Ovary (tissue), 10 donors: ENCODE measurements at regions of chr6 and their contacts with region 1.

Region 1: DNA sequence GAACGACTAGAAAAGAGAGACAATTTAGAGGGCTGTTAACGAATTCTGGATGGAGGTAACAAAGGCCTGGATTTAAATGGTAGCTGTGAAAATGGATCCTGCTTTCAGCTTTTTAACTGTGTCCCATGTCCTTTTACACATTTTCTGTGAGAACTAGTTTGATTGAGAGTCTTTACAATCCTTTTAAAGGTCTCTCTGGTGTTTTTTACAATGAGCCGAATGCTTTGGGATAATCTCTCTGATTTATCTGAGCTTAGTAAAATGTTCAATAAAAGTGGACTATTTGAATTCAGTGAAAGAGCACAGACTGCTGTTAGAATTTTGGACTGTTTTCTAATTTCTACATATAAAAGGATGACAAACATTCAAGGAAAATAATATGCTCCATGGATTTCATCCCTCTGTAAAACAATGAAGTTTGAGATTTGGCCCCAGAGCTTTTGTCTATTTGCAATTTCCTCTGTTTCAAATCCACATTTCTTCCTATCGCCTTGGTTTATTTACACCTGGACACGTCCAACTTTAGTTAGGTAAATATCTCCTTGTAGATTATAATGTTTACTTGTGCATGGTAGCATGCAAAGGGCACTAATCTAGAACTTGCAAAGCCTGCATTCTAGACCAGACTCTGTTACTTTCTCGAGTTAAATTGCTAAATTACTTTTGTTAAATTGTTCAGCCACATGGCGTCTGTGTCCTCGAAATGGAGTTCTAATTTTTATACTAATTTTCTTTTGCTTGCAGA is 871.0 kb upstream of the CITED2 start:
- DNase-seq: no peak
- H3K4me3 ChIP-seq: no peak overlapping the region
- H3K27ac ChIP-seq: no peak overlapping the region
- H3K4me1 ChIP-seq: no peaks in the 10 kb centered on the region
- H3K27me3 ChIP-seq: no peaks in the 10 kb centered on the region
- CTCF ChIP-seq: no peak
- EP300 ChIP-seq: no peak
- POLR2A ChIP-seq: no peak

Region 2: DNA sequence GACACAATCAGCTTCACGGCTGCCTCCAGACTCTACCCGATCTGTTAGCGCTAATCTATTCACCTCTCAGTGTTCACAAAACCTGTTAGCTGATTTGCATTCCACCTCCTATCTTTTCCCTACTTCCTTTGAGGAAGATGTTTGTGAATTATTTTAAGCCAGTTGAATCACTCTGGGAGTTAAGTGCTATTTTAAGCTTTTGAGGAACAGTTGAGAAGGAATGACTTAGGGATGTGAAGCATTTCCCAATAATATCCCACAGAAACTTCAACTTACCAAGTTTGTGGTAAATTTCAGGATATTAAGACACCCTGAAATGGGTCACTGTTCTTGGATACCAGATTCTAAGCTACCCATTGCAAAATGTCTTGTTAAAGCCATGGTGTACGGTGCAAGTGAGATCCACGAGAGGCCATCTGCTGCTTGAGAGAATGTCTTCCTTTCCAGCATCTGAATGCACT is 725.9 kb before region 1 on chr6:
- intact Hi-C with region 1: no loop called
- DNase-seq: no peak
- H3K4me3 ChIP-seq: no peak overlapping the region
- H3K27ac ChIP-seq: no peak overlapping the region
- H3K4me1 ChIP-seq: no peaks in the 10 kb centered on the region
- H3K27me3 ChIP-seq: no peaks in the 10 kb centered on the region
- CTCF ChIP-seq: no peak
- EP300 ChIP-seq: no peak
- POLR2A ChIP-seq: no peak

Region 3: DNA sequence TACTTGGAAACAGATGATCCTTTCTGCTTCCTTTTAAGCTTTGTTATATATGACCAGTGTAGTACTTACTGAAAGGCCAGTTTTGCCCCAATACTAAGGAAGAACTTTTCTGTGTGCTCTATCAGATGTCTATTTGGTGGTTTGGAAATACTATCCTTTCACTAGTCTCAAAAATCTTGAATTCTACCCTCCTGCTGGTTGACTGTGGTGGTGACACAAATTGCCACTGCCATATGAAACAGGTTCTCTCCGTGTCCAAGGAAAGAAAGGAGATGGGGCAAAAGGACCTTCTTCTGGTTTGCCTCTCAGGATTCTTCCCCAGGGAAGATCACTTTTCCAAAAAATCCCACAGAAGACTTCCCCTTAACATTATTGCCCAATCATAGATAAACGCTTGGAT is 1893.4 kb after region 1 on chr6:
- intact Hi-C with region 1: loop called in 1 of 4 experiments (anchors 10 kb)
- DNase-seq: no peak
- H3K4me3 ChIP-seq: no peak overlapping the region
- H3K27ac ChIP-seq: no peak overlapping the region
- H3K4me1 ChIP-seq: no peaks in the 10 kb centered on the region
- H3K27me3 ChIP-seq: no peaks in the 10 kb centered on the region
- CTCF ChIP-seq: no peak
- EP300 ChIP-seq: no peak
- POLR2A ChIP-seq: no peak